Heart left ventricle (tissue), 16 donors: ENCODE measurements at regions of chr20 and their contacts with region 1.

Region 1: GRCh38 chr20:35711588-35712209 is 12.5 kb downstream of the ROMO1 start:
- DNase-seq: no peak
- ATAC-seq: no peak
- H3K4me3 ChIP-seq: no peak overlapping the region
- H3K27ac ChIP-seq: no peak overlapping the region
- H3K4me1 ChIP-seq: peaks cover 0 to 46% (median 30%) of the 10 kb centered on the region in 12 donors
- H3K27me3 ChIP-seq: no peaks in the 10 kb centered on the region
- CTCF ChIP-seq: no peak
- POLR2A ChIP-seq: no peak

Region 2: GRCh38 chr20:34676642-34677373 is 1034.9 kb before region 1 on chr20 and contains the start of gene PIGU:
- intact Hi-C with region 1: no loop called
- DNase-seq: peak; percentile 96 to 97 (median 97)
- ATAC-seq: peak; percentile 98 to 100 (median 100)
- H3K4me3 ChIP-seq: peak within 1 kb of the TSS; percentile 50 to 95 (median 79)
- H3K27ac ChIP-seq: peak within 1 kb of the TSS; percentile 23 to 88 (median 76)
- H3K4me1 ChIP-seq: peaks cover 0 to 20% (median 9%) of the 10 kb centered on the region in 12 donors
- H3K27me3 ChIP-seq: no peaks in the 10 kb centered on the region
- CTCF ChIP-seq: peak in 9 of 12 donors; percentile 14 to 52 (median 27)
- POLR2A ChIP-seq: peak in 1 of 2 donors; percentile 51
- total RNA-seq, gene PIGU: 10.8 to 20.8 (median 15.0) TPM

Region 3: DNA sequence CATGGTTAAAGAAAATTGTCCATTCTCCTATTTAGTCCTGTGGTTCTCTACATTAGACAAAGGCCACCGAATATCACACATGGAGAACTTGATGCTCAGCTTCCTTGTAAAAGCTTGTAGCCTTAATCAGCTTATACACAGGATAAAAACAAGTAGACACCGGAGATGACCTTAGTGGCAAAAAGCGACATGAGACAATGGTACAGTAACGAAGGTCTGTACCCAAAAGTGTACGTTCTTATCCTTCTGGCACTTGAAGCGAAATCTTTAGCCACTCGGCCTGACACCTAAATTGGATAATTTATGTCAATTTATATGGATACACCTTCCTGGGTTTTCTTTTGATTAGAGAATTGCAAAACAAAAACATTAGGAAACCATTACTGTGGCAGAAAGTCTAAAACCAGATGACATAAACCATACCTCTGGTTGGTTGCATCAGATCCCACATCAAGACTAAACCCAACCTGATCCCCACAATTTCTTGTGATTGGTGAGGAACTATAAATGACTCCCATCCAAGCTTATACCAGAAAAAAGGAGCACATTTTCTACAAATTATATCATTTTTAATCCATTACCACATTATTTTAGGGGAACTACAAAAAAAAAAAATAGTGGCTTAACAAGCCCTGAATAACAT is 24.2 kb after region 1 on chr20:
- intact Hi-C with region 1: loop called in 1 of 10 experiments (anchors 1 kb)
- DNase-seq: no peak
- ATAC-seq: no peak
- H3K4me3 ChIP-seq: peak overlapping the region in 4 of 12 donors; percentile 3 to 16 (median 8)
- H3K27ac ChIP-seq: peak overlapping the region in 1 of 12 donors; percentile 19
- H3K4me1 ChIP-seq: peaks cover 29 to 98% (median 80%) of the 10 kb centered on the region in 12 donors
- H3K27me3 ChIP-seq: no peaks in the 10 kb centered on the region
- CTCF ChIP-seq: no peak
- POLR2A ChIP-seq: no peak